ENCODE measurements at regions of chr3 and their contacts with region 1.

Region 1: GRCh38 chr3:32510075-32510724 is 7.5 kb upstream of the CMTM6 start:
- DNase-seq: peak; percentile 77 to 78
- H3K4me3 ChIP-seq: no peak overlapping the region
- H3K4me1 ChIP-seq: no peaks in the 10 kb centered on the region
- H3K27me3 ChIP-seq: no peaks in the 10 kb centered on the region

Region 2: DNA sequence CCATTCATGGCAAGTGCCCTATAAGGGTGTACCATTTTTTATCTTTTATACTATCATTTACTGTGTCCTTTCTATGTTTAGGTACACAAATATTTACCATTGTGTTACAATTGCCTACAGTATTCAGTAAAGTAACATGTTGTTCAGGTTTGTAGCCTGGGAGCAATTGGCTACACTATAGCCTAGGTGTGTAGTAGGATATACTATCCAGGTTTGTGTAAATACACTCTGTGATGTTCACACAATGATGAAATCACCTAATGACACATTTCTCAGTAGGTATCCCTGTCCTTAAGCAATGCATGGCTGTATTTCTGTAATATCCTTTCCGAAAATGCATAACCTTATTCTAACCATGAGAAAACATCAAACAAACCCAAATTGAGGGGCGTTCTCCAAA is 156.9 kb after region 1 on chr3:
- in situ Hi-C with region 1: loop called (anchors 5 kb)
- DNase-seq: no peak
- H3K4me3 ChIP-seq: no peak overlapping the region
- H3K4me1 ChIP-seq: no peaks in the 10 kb centered on the region
- H3K27me3 ChIP-seq: 0 out of 2 replicates have a peak, but pooled peaks cover 4% of the 10 kb centered on the region

Region 3: GRCh38 chr3:32856355-32856889 is 346.2 kb after region 1 on chr3:
- in situ Hi-C with region 1: no loop called
- DNase-seq: no peak
- H3K4me3 ChIP-seq: no peak overlapping the region
- H3K4me1 ChIP-seq: peaks cover 3% of the 10 kb centered on the region; the same call in 1 of the 2 replicates
- H3K27me3 ChIP-seq: no peaks in the 10 kb centered on the region

Region 4: GRCh38 chr3:32947789-32948238 is 437.6 kb after region 1 on chr3:
- in situ Hi-C with region 1: loop called (anchors 25 kb)
- DNase-seq: peak; percentile 74 to 95
- H3K4me3 ChIP-seq: no peak overlapping the region
- H3K4me1 ChIP-seq: no peaks in the 10 kb centered on the region
- H3K27me3 ChIP-seq: no peaks in the 10 kb centered on the region

Measured in HAP-1 (cell line).